ENCODE measurements at regions of chr6 and their contacts with region 1.

Region 1: GRCh38 chr6:42879372-42880239 is at the start of gene RPL7L1:
- DNase-seq: peak; percentile 74 to 84
- H3K4me3 ChIP-seq: peak within 1 kb of the TSS; percentile 96
- H3K27ac ChIP-seq: peak within 1 kb of the TSS; percentile 91
- H3K4me1 ChIP-seq: peaks cover 10% of the 10 kb centered on the region
- H3K27me3 ChIP-seq: no peaks in the 10 kb centered on the region
- CTCF ChIP-seq: 0 out of 2 replicates have a peak, but pooled peaks have one; percentile 14
- total RNA-seq, gene RPL7L1: 84.1 and 87.1 TPM in 2 replicates

Region 2: GRCh38 chr6:42166444-42167141 is 713.0 kb before region 1 on chr6:
- CTCF ChIA-PET with region 1: no interaction called
- POLR2A ChIA-PET with region 1: no interaction called
- intact Hi-C with region 1: loop called (anchors 1 kb)
- DNase-seq: peak; percentile 67 to 83
- H3K4me3 ChIP-seq: no peak overlapping the region
- H3K27ac ChIP-seq: no peak overlapping the region
- H3K4me1 ChIP-seq: 0 out of 2 replicates have a peak, but pooled peaks cover 7% of the 10 kb centered on the region
- H3K27me3 ChIP-seq: no peaks in the 10 kb centered on the region
- CTCF ChIP-seq: peak; percentile 100

Region 3: DNA sequence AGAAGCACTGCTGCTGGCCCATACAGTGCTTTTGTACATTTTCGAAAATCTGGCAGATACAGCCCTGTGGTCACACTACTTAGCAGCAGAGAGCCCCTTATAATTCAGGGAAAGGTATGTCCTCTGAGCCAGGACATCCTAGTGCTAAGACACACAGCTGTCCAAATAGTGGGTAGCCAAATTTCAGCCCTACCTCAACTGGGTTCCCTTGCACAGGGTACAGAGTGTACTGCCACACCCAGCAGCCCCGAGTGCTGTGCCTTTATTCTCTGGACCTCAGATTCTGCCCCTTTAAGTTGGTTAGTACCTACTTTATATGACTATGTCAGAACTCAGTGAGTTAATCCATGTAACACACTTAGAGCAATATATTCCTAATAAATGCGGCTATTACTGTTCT is 204.8 kb before region 1 on chr6:
- CTCF ChIA-PET with region 1: interaction called, 3 read pairs
- POLR2A ChIA-PET with region 1: no interaction called
- intact Hi-C with region 1: loop called (anchors 5 kb)
- DNase-seq: no peak
- H3K4me3 ChIP-seq: no peak overlapping the region
- H3K27ac ChIP-seq: no peak overlapping the region
- H3K4me1 ChIP-seq: no peaks in the 10 kb centered on the region
- H3K27me3 ChIP-seq: no peaks in the 10 kb centered on the region
- CTCF ChIP-seq: no peak

Region 4: GRCh38 chr6:42745707-42746462 is 133.7 kb before region 1 on chr6 and contains the start of gene TBCC:
- CTCF ChIA-PET with region 1: no interaction called
- POLR2A ChIA-PET with region 1: interaction called, 7 read pairs
- intact Hi-C with region 1: loop called (anchors 1 kb)
- DNase-seq: peak; percentile 91 to 94
- H3K4me3 ChIP-seq: peak within 1 kb of the TSS; percentile 78
- H3K27ac ChIP-seq: peak within 1 kb of the TSS; percentile 70
- H3K4me1 ChIP-seq: peaks cover 19% of the 10 kb centered on the region
- H3K27me3 ChIP-seq: no peaks in the 10 kb centered on the region
- CTCF ChIP-seq: no peak
- total RNA-seq, gene TBCC: 12.3 and 15.1 TPM in 2 replicates

Region 5: DNA sequence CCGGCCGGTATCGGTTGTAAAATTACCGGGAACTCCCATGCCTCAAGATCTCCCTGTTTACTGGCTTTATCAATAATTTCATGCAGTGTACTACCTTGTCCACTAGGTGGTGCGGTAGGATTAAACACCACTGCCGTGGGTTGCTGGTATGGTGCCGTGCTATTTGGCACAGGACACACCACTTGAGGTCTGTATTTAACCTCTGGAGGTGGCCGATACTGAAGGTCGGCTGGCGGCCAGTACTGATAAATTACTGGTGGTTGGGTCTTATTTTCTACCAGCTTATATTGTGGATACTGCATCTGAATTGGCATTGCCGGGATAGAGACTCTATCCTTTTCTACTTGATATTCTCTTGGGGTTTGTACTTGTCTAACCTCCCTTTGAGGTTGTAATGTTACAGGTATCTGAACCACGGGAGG is 21.9 kb after region 1 on chr6:
- CTCF ChIA-PET with region 1: no interaction called
- POLR2A ChIA-PET with region 1: interaction called, 11 read pairs
- intact Hi-C with region 1: no loop called
- DNase-seq: peak; percentile 68 to 77
- H3K4me3 ChIP-seq: no peak overlapping the region
- H3K27ac ChIP-seq: no peak overlapping the region
- H3K4me1 ChIP-seq: no peaks in the 10 kb centered on the region
- H3K27me3 ChIP-seq: peaks cover 4% of the 10 kb centered on the region; the same call in 1 of the 2 replicates
- CTCF ChIP-seq: peak; percentile 95

Measured in PC-9 (cell line).